ENCODE measurements at regions of chr9 and their contacts with region 1.

Region 1: DNA sequence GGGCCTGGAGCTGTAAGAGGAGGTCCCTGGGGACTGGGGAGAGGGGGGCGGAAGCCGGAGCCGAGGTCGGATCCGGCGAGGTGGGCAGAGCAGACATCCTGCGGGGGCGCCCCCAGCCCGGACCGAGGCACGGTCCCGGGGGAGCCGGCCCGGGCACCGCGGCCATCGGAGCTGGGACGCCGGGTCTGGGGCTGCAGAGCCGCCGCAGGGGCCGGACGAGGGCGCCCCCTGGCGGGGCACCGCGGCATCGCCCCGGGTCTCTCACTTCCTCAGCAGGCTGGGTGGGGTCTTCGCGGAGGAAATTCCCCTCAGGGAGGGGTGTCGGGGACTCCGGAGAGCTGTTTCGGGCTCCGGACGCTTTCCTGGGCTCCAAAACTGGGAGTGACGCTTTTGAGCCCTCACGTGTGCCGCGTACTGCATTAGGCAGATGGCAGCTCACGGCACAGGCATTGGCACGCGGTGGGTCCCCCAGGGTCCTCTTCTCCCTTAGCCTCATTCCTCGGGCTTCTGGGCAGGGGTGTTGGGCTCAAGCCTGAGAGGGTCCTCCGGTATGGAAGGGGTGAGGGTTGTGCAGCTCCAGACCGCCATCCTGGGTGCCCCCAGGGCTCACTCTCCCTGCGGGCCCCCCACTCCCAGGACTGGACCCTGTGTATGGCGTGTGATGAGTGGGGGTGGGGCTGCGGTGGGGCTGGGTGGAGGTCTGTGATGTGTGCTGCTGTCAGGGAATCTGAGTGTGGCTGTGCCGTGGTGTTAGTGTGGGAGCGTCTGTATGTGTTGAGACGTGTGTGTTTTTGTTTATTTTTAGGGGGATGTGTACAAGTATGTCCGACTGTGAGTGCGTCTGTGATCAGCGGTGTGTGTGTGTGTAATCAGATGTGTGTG is 29.6 kb downstream of the LHX2 start:
- DNase-seq: peak; percentile 62
- H3K4me3 ChIP-seq: peak overlapping the region; percentile 63
- H3K27ac ChIP-seq: no peak overlapping the region
- H3K4me1 ChIP-seq: peaks cover 33% of the 10 kb centered on the region
- H3K27me3 ChIP-seq: peaks cover 84% of the 10 kb centered on the region
- CTCF ChIP-seq: peak; percentile 96

Region 2: GRCh38 chr9:123401879-123402513 is 639.2 kb before region 1 on chr9:
- intact Hi-C with region 1: loop called (anchors 5 kb)
- DNase-seq: no peak
- H3K4me3 ChIP-seq: peak overlapping the region; percentile 38
- H3K27ac ChIP-seq: no peak overlapping the region
- H3K4me1 ChIP-seq: peaks cover 17% of the 10 kb centered on the region
- H3K27me3 ChIP-seq: no peaks in the 10 kb centered on the region
- CTCF ChIP-seq: peak; percentile 81

Region 3: GRCh38 chr9:123544007-123544827 is 497.0 kb before region 1 on chr9:
- intact Hi-C with region 1: loop called (anchors 10 kb)
- DNase-seq: no peak
- H3K4me3 ChIP-seq: no peak overlapping the region
- H3K27ac ChIP-seq: no peak overlapping the region
- H3K4me1 ChIP-seq: peaks cover 16% of the 10 kb centered on the region
- H3K27me3 ChIP-seq: no peaks in the 10 kb centered on the region
- CTCF ChIP-seq: peak; percentile 90